ENCODE measurements at regions of chr7 and their contacts with region 1.

Region 1: DNA sequence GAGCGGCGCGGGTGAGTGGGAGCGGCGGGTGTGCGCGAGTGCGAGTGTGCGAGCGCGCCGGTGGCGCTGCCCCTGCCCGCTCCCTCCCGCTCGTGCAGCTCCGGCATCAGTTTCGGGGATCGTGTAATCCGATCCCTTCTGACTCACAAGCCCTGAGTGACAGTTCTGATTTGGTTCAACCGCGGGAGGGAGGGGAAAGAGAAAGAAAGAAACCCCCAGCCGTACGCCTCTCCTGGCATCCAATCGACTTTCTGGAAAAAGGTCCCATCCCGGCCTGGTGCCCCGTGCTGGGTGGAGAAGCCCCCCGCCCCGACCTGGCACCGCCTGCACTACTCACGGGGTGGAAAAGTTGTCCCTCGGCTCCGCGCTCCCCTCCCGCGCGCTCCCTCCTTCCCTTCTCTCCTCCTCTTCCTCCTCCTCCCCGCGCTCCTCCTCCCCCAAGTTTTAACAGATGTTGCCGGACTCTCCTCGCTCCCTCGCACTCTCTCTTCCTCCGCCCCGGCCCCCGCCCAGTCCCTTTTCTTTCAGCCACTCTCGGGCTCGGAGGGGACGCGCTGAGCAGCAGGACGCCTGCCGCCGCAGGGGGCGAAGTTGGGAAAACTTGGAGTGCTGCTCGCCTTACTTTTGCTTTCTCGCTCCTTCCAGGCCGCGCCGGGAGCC is at the start of gene GLI3:
- DNase-seq: peak; percentile 97
- H3K4me3 ChIP-seq: peak within 1 kb of the TSS; percentile 89
- H3K27ac ChIP-seq: peak within 1 kb of the TSS; percentile 88
- H3K4me1 ChIP-seq: peaks cover 53% of the 10 kb centered on the region
- H3K27me3 ChIP-seq: no peaks in the 10 kb centered on the region
- CTCF ChIP-seq: no peak
- total RNA-seq, gene GLI3: 52.6 and 58.7 TPM in 2 replicates

Region 2: GRCh38 chr7:41992881-41993867 is 244.1 kb before region 1 on chr7:
- CTCF ChIA-PET with region 1: no interaction called
- POLR2A ChIA-PET with region 1: interaction called, 3 read pairs
- intact Hi-C with region 1: loop called (anchors 5 kb)
- DNase-seq: peak; percentile 96
- H3K4me3 ChIP-seq: no peak overlapping the region
- H3K27ac ChIP-seq: peak overlapping the region; percentile 88
- H3K4me1 ChIP-seq: peaks cover 99% of the 10 kb centered on the region
- H3K27me3 ChIP-seq: no peaks in the 10 kb centered on the region
- CTCF ChIP-seq: no peak

Region 3: GRCh38 chr7:42471574-42472174 is 234.4 kb after region 1 on chr7:
- CTCF ChIA-PET with region 1: no interaction called
- POLR2A ChIA-PET with region 1: no interaction called
- intact Hi-C with region 1: no loop called
- DNase-seq: no peak
- H3K4me3 ChIP-seq: no peak overlapping the region
- H3K27ac ChIP-seq: no peak overlapping the region
- H3K4me1 ChIP-seq: no peaks in the 10 kb centered on the region
- H3K27me3 ChIP-seq: no peaks in the 10 kb centered on the region
- CTCF ChIP-seq: no peak

Region 4: DNA sequence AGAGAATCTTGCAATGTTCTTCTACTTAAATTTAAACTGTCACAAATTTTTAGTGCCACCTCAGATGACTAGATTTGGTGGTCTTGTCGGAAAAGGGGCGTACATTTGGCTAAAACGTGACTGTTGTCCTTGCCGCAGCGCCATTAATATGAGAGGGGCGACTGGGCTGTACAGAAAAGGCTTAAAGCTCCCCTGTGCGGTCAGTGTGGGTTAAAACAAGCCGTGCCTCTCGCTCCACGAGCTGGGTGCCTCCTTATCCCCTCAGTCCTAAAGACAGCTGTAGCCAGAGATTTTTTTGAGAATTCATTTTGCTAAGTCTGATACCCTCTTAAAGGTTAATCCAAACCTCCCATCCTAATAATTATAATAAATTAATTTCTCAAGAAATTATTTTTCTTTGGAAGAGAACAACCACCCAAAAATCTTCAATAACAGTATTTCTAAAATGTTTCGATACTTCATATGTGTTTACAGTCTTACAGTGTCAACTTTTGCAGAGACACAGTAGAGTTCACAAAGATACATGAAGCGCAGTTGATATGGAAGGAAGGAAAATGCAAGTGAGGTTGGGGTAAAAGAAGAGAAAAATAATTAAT is 606.0 kb after region 1 on chr7:
- CTCF ChIA-PET with region 1: no interaction called
- POLR2A ChIA-PET with region 1: no interaction called
- intact Hi-C with region 1: loop called (anchors 10 kb)
- DNase-seq: peak; percentile 83
- H3K4me3 ChIP-seq: peak overlapping the region; percentile 23
- H3K27ac ChIP-seq: no peak overlapping the region
- H3K4me1 ChIP-seq: no peaks in the 10 kb centered on the region
- H3K27me3 ChIP-seq: peaks cover 7% of the 10 kb centered on the region
- CTCF ChIP-seq: peak; percentile 80